Activated CD4-positive, alpha-beta memory T cell treated with anti-CD3 and anti-CD28 coated beads for 36 hours (primary cell): ENCODE measurements at regions of chr11 and their contacts with region 1.

Region 1: GRCh38 chr11:115324581-115325432 is 179.4 kb downstream of the CADM1 start:
- DNase-seq: peak; percentile 11
- H3K4me3 Mint-ChIP-seq: no peak overlapping the region
- H3K27ac Mint-ChIP-seq: no peak overlapping the region
- H3K4me1 Mint-ChIP-seq: no peaks in the 10 kb centered on the region
- H3K27me3 Mint-ChIP-seq: no peaks in the 10 kb centered on the region

Region 2: DNA sequence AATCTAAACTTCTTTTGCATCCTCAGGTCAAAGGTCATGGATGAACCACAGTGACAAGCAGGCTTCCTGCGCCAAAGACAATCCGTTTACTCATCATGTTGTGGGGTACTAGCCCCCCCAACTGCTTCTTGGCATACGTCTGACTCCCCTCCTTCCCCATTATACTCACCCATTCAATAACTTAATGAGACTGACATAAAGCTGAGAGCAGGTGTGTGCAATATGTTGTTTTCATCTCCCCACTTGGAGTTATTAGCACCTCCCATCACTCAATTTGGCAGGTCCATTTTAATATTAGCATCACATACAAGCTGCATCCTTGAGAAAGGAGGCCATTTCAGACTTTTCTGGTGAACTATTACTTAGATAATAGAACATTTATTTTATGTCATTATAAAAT is 22.3 kb after region 1 on chr11:
- CTCF ChIA-PET with region 1: no interaction called
- POLR2A ChIA-PET with region 1: no interaction called
- intact Hi-C with region 1: no loop called
- DNase-seq: no peak
- H3K4me3 Mint-ChIP-seq: no peak overlapping the region
- H3K27ac Mint-ChIP-seq: no peak overlapping the region
- H3K4me1 Mint-ChIP-seq: no peaks in the 10 kb centered on the region
- H3K27me3 Mint-ChIP-seq: peaks cover 6% of the 10 kb centered on the region

Region 3: GRCh38 chr11:116224154-116224888 is 899.5 kb after region 1 on chr11:
- CTCF ChIA-PET with region 1: interaction called, 6 read pairs
- POLR2A ChIA-PET with region 1: no interaction called
- intact Hi-C with region 1: loop called (anchors 1 kb)
- DNase-seq: peak; percentile 44
- H3K4me3 Mint-ChIP-seq: no peak overlapping the region
- H3K27ac Mint-ChIP-seq: no peak overlapping the region
- H3K4me1 Mint-ChIP-seq: no peaks in the 10 kb centered on the region
- H3K27me3 Mint-ChIP-seq: peaks cover 15% of the 10 kb centered on the region

Region 4: DNA sequence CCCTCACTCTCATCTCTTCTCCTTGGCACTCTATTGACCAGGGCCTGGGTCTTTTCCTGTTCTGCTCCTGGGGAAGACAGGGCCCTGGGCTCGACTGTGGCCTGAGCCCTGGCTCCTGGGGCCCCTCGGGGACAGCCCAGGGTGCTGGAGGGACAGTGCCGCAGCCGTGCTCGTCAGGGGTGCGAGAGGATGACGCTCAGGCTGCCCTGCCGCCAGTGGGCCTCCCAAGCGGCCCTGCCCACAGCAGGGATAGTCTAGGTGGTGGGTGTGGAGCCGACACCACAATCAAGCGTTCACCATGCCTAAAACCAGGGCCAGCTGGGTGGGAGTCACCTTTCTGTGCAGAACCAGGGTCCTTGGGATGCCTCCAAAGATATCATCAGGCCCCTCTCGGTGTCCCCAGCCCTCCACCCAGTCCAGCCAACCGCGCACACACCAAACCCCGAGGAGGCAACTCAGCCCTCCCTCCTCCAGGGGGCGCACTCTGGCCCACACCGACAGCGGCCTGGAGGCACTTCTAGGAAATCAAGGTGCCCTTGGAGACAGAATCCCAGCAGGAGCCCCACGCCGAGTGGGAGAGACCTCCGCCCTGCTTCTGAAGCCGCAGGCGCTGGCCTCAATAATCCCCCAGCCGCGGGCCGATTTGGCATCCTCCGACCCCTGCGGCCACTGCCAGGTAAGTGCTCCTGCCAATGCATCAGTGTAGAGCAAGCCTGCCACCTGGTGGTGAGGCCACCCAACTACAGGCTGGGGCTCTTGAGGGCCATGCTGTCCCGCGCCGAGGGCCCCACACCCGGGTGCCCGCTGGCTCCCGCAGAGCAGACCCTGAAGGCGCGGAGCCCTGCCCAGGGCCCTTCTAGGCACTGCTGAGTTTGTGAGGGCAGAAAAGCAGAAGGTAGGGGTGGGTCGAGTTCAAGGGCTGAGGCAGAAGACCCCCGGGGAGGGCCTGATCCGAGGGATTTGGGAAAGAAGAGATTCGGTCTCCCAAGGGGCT is 951.5 kb after region 1 on chr11:
- CTCF ChIA-PET with region 1: no interaction called
- POLR2A ChIA-PET with region 1: no interaction called
- intact Hi-C with region 1: loop called (anchors 1 kb)
- DNase-seq: peak; percentile 85
- H3K4me3 Mint-ChIP-seq: peak overlapping the region; percentile 35
- H3K27ac Mint-ChIP-seq: no peak overlapping the region
- H3K4me1 Mint-ChIP-seq: no peaks in the 10 kb centered on the region
- H3K27me3 Mint-ChIP-seq: no peaks in the 10 kb centered on the region